CD4-positive, alpha-beta memory T cell (primary cell): ENCODE measurements at regions of chr3 and their contacts with region 1.

Region 1: DNA sequence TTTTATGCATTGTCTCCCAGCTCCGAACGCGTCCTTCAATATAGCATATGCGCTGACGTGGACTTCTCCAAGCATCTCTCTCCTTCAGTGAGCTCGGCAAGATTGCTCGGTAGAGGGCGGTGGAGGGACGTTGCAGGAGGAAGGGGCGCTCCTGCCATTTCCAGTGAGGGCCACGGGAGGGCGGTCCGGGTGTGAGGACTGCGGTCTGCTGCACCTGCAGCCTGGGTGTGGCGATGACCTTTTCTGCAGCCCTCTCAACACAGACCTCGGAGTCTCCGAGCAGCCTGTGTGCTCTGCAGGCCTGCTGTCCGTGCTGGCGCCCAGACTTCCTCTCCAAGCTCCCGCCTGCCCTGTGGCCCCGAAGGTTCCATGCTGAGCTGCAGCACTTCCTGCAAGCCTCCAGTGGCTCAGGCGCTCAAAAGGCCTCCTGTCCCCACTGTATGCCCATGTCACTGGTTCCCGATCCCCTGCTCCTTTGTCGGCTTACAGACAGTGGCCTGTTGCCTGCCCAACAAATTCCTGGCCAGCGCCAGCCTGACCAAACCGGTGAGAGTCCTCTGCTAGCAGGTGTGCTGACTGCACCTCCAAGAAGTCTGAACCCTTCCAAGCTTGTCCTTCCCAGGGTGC is 8.9 kb upstream of the RTP3 start:
- DNase-seq: peak; percentile 86 to 90 (median 88)
- H3K4me3 ChIP-seq: peak overlapping the region; percentile 23 to 38
- H3K4me3 Mint-ChIP-seq: peak overlapping the region; percentile 57 to 80 (median 72)
- H3K27ac ChIP-seq: no peak overlapping the region
- H3K27ac Mint-ChIP-seq: peak overlapping the region in 3 of 7 donors; percentile 36 to 64 (median 53)
- H3K4me1 ChIP-seq: peaks cover 22% of the 10 kb centered on the region
- H3K4me1 Mint-ChIP-seq: peaks cover 5 to 17% (median 14%) of the 10 kb centered on the region in 4 donors
- H3K27me3 ChIP-seq: no peaks in the 10 kb centered on the region
- H3K27me3 Mint-ChIP-seq: no peaks in the 10 kb centered on the region

Region 2: DNA sequence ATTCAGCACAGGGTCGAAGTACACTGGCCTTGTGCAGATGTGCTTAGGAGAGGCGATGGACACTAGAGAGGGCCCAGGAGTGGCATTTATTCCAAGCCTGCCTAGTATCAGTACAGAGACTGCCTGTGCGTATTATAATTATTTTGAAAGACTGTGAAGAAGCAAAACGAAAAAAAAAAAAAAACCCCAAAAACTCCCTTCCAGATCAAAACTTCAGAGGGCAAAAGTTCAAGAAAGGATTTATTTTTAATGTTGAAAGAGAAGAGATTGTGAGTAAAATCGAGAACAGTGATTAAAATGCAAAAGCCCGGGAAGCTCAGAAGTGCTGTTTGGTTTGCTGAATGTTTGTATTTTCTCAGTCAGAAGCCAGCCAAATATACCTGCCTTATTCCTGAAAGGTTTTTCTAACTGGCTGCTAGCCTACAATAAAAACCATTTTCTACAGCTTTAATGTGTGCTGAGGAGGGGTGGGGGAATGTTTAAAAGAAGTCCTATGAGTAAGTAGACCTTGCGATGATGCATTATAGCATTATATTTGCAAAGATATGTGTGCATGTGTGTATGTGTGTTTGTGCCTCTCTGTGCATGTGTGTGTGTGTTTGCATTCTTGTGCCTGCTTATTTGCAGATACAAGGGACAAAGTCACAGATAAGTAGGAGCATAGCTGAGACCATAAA is 627.7 kb before region 1 on chr3:
- CTCF ChIA-PET with region 1: no interaction called
- POLR2A ChIA-PET with region 1: no interaction called
- intact Hi-C with region 1: no loop called
- DNase-seq: no peak
- H3K4me3 ChIP-seq: no peak overlapping the region
- H3K4me3 Mint-ChIP-seq: peak overlapping the region in 2 of 8 donors; percentile 39 to 45
- H3K27ac ChIP-seq: no peak overlapping the region
- H3K27ac Mint-ChIP-seq: peak overlapping the region in 1 of 7 donors; percentile 38
- H3K4me1 ChIP-seq: peaks cover 15% of the 10 kb centered on the region
- H3K4me1 Mint-ChIP-seq: peaks cover 20 to 28% (median 23%) of the 10 kb centered on the region in 4 donors
- H3K27me3 ChIP-seq: no peaks in the 10 kb centered on the region
- H3K27me3 Mint-ChIP-seq: peaks cover 10 to 26% of the 10 kb centered on the region in 2 donors

Region 3: GRCh38 chr3:46533091-46533490 is 44.2 kb after region 1 on chr3:
- CTCF ChIA-PET with region 1: interaction called, 118 read pairs
- POLR2A ChIA-PET with region 1: interaction called, 46 read pairs
- intact Hi-C with region 1: loop called (anchors 1 kb)
- DNase-seq: no peak
- H3K4me3 ChIP-seq: no peak overlapping the region
- H3K4me3 Mint-ChIP-seq: no peak overlapping the region
- H3K27ac ChIP-seq: no peak overlapping the region
- H3K27ac Mint-ChIP-seq: no peak overlapping the region
- H3K4me1 ChIP-seq: peaks cover 15% of the 10 kb centered on the region
- H3K4me1 Mint-ChIP-seq: peaks cover 10 to 23% (median 17%) of the 10 kb centered on the region in 4 donors
- H3K27me3 ChIP-seq: no peaks in the 10 kb centered on the region
- H3K27me3 Mint-ChIP-seq: no peaks in the 10 kb centered on the region

Region 4: GRCh38 chr3:46549408-46549904 is 60.6 kb after region 1 on chr3:
- CTCF ChIA-PET with region 1: interaction called, 118 read pairs
- POLR2A ChIA-PET with region 1: no interaction called
- intact Hi-C with region 1: no loop called
- DNase-seq: no peak
- H3K4me3 ChIP-seq: no peak overlapping the region
- H3K4me3 Mint-ChIP-seq: no peak overlapping the region
- H3K27ac ChIP-seq: no peak overlapping the region
- H3K27ac Mint-ChIP-seq: peak overlapping the region in 1 of 7 donors; percentile 82
- H3K4me1 ChIP-seq: peaks cover 9% of the 10 kb centered on the region
- H3K4me1 Mint-ChIP-seq: peaks cover 7 to 14% (median 9%) of the 10 kb centered on the region in 4 donors
- H3K27me3 ChIP-seq: no peaks in the 10 kb centered on the region
- H3K27me3 Mint-ChIP-seq: peaks cover 0 to 5% of the 10 kb centered on the region in 2 donors

Region 5: GRCh38 chr3:46566036-46566641 is 77.3 kb after region 1 on chr3 and contains the start of gene LRRC2:
- CTCF ChIA-PET with region 1: interaction called, 331 read pairs
- POLR2A ChIA-PET with region 1: interaction called, 59 read pairs
- intact Hi-C with region 1: no loop called
- DNase-seq: peak in 4 of 5 donors; percentile 18 to 36 (median 28)
- H3K4me3 ChIP-seq: peak within 1 kb of the TSS; percentile 30 to 47
- H3K4me3 Mint-ChIP-seq: peak within 1 kb of the TSS; percentile 75 to 83 (median 80)
- H3K27ac ChIP-seq: no peak within 1 kb of the TSS
- H3K27ac Mint-ChIP-seq: peak within 1 kb of the TSS in 3 of 7 donors; percentile 37 to 82 (median 60)
- H3K4me1 ChIP-seq: peaks cover 13% of the 10 kb centered on the region
- H3K4me1 Mint-ChIP-seq: peaks cover 6 to 16% (median 13%) of the 10 kb centered on the region in 4 donors
- H3K27me3 ChIP-seq: peaks cover 6% of the 10 kb centered on the region
- H3K27me3 Mint-ChIP-seq: peaks cover 3 to 22% of the 10 kb centered on the region in 2 donors
- total RNA-seq, gene LRRC2: 0.50 to 1.0 TPM

Region 6: DNA sequence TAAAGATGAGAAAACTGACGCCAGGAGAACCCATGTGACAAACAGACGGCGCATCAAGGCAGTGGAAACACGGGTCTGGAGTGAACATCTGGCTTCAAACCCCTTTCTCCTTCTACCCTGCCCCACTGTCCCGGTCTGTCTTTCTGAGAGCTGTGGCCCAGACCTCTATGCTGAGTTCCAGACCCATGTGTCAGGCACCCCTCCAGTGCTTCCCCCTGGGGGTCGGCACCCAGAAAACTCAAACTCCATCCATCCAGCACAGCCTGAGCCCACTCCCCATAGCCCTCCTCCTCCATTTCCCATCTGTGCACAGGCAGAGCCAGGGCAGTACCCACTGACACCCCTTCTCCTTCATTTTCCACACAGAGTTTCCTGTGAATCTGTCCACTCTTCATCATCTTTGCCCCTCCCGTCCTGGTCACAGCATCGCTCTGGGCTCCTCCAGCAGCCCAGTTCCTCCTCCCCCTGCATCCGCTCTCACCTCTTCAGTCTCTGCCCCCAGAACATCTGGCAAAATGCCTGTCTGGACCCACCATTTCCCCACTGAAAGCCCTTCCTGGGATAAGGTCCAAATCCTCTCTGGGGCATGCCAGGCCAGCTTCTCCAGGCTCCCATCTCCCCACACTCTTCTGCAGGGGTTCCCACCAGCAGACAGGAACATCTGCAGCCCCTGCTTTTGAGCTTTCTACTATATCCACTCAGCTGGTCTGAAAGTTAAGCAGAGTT is 126.4 kb after region 1 on chr3:
- CTCF ChIA-PET with region 1: interaction called, 11 read pairs
- POLR2A ChIA-PET with region 1: no interaction called
- intact Hi-C with region 1: no loop called
- DNase-seq: no peak
- H3K4me3 ChIP-seq: no peak overlapping the region
- H3K4me3 Mint-ChIP-seq: no peak overlapping the region
- H3K27ac ChIP-seq: no peak overlapping the region
- H3K27ac Mint-ChIP-seq: peak overlapping the region in 3 of 7 donors; percentile 53 to 72 (median 68)
- H3K4me1 ChIP-seq: no peaks in the 10 kb centered on the region
- H3K4me1 Mint-ChIP-seq: peaks cover 0 to 3% (median 0%) of the 10 kb centered on the region in 4 donors
- H3K27me3 ChIP-seq: no peaks in the 10 kb centered on the region
- H3K27me3 Mint-ChIP-seq: peaks cover 12 to 16% of the 10 kb centered on the region in 2 donors

Region 7: GRCh38 chr3:48247401-48247811 is 1758.6 kb after region 1 on chr3:
- CTCF ChIA-PET with region 1: no interaction called
- POLR2A ChIA-PET with region 1: no interaction called
- intact Hi-C with region 1: no loop called
- DNase-seq: no peak
- H3K4me3 ChIP-seq: no peak overlapping the region
- H3K4me3 Mint-ChIP-seq: no peak overlapping the region
- H3K27ac ChIP-seq: no peak overlapping the region
- H3K27ac Mint-ChIP-seq: peak overlapping the region in 4 of 7 donors; percentile 12 to 43 (median 28)
- H3K4me1 ChIP-seq: peaks cover 16% of the 10 kb centered on the region
- H3K4me1 Mint-ChIP-seq: peaks cover 5 to 20% (median 8%) of the 10 kb centered on the region in 4 donors
- H3K27me3 ChIP-seq: no peaks in the 10 kb centered on the region
- H3K27me3 Mint-ChIP-seq: no peaks in the 10 kb centered on the region